GM12878 (cell line): ENCODE measurements at regions of chr11 and their contacts with region 1.

Region 1: DNA sequence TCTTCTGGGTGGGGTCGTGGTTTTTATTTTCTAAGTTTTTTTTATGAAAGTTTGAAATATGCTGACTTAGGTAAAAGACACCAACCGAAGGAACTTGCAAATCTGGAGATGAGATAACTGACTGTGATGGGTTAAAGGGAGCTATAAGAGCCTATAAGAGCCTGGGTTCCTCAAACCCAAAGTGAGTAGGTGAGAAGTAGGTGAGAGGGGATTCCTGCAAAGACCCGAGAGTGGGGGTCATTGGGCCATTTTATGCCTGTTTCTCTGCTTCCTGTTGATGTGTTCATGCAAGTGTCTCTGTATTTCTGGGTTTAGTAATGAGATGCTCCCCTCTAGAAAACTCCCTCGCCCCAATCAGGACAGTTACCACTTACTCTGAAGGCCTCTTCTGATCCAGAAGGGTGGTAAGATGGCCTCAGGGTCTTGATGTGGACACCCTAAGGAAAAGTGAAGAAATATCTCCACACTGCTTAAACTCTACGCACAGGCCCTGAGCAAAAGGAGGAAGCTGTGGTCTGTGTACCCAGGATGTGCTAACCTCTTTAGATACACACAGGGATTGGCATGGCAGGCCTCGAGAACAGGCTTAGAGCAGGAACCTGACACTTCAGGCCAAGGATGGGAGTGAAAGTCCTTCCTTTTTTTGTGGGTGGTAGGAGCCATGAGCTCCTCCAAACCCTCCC is 1.8 kb downstream of the FLI1 start:
- DNase-seq: no peak
- ATAC-seq: peak; percentile 40
- H3K4me3 ChIP-seq: peak overlapping the region; percentile 95
- H3K27ac ChIP-seq: peak overlapping the region; percentile 81
- H3K4me1 ChIP-seq: peaks cover 28% of the 10 kb centered on the region
- H3K27me3 ChIP-seq: no peaks in the 10 kb centered on the region
- CTCF ChIP-seq: no peak
- EP300 ChIP-seq: no peak
- POLR2A ChIP-seq: no peak
- RAD21 ChIP-seq: no peak

Region 2: GRCh38 chr11:128709402-128709801 is 13.7 kb after region 1 on chr11:
- CTCF ChIA-PET with region 1: interaction called, 4 read pairs
- POLR2A ChIA-PET with region 1: interaction called, 3 read pairs
- RAD21 ChIA-PET with region 1: interaction called, 4 read pairs
- SMC1A ChIA-PET with region 1: interaction called, 17 read pairs
- in situ Hi-C with region 1: no loop called
- intact Hi-C with region 1: no loop called
- DNase-seq: no peak
- ATAC-seq: no peak
- H3K4me3 ChIP-seq: no peak overlapping the region
- H3K27ac ChIP-seq: no peak overlapping the region
- H3K4me1 ChIP-seq: peaks cover 19% of the 10 kb centered on the region
- H3K27me3 ChIP-seq: no peaks in the 10 kb centered on the region
- CTCF ChIP-seq: no peak
- EP300 ChIP-seq: no peak
- POLR2A ChIP-seq: no peak
- RAD21 ChIP-seq: no peak

Region 3: GRCh38 chr11:128714881-128715280 is 19.2 kb after region 1 on chr11:
- CTCF ChIA-PET with region 1: interaction called, 16 read pairs
- POLR2A ChIA-PET with region 1: interaction called, 16 read pairs
- RAD21 ChIA-PET with region 1: interaction called, 12 read pairs
- SMC1A ChIA-PET with region 1: interaction called, 17 read pairs
- in situ Hi-C with region 1: no loop called
- intact Hi-C with region 1: loop called (anchors 2 kb)
- DNase-seq: no peak
- ATAC-seq: no peak
- H3K4me3 ChIP-seq: no peak overlapping the region
- H3K27ac ChIP-seq: no peak overlapping the region
- H3K4me1 ChIP-seq: peaks cover 57% of the 10 kb centered on the region
- H3K27me3 ChIP-seq: no peaks in the 10 kb centered on the region
- CTCF ChIP-seq: no peak
- EP300 ChIP-seq: no peak
- POLR2A ChIP-seq: no peak
- RAD21 ChIP-seq: no peak

Region 4: GRCh38 chr11:128720522-128720985 is 24.9 kb after region 1 on chr11:
- CTCF ChIA-PET with region 1: interaction called, 16 read pairs
- POLR2A ChIA-PET with region 1: interaction called, 16 read pairs
- RAD21 ChIA-PET with region 1: interaction called, 12 read pairs
- SMC1A ChIA-PET with region 1: interaction called, 16 read pairs
- in situ Hi-C with region 1: no loop called
- intact Hi-C with region 1: loop called (anchors 2 kb)
- DNase-seq: no peak
- ATAC-seq: peak; percentile 59
- H3K4me3 ChIP-seq: peak overlapping the region; percentile 78
- H3K27ac ChIP-seq: peak overlapping the region; percentile 94
- H3K4me1 ChIP-seq: peaks cover 85% of the 10 kb centered on the region
- H3K27me3 ChIP-seq: no peaks in the 10 kb centered on the region
- CTCF ChIP-seq: no peak
- EP300 ChIP-seq: no peak
- POLR2A ChIP-seq: peak; percentile 84
- RAD21 ChIP-seq: 0 out of 2 replicates have a peak, but pooled peaks have one; percentile 1